ENCODE measurements at regions of chr3 and their contacts with region 1.

Region 1: DNA sequence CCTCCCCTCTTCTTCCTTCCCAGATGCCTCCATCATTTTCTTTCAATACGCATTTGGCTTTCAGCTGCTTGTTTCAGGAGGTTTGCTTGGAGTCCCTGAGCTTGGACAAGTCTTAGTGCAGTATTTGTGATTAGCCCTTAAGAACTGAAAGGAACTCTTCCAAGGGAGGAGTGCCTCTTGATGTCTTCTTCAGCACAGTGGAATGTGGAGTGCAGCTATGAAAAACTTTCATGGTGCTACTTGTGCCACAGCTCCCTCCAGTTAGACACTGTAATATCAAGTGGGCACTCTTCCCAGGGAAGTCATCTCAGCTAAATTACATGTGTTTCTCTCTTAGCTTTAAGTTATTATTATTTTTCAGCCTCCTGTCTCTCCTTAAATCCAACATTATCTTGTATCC is 173.1 kb downstream of the NECTIN3 start:
- DNase-seq: no peak

Region 2: DNA sequence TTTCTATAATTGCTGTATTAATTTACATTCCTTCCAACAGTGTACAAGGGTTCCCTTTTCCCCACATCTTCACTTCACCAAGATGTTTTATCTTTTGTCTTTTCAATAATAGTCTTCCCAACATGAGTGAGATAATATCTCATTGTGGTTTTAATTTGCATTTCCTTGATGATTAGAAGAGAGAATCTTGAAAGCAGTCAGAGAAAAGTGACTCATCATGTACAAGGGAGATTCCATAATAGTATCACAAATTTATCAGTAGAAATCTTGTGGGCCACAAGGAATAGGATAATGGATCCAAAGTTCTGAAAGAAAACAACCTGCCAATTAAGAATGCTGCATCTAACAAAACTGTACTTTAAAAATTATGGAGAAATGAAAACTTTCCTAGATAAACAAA is 16.1 kb after region 1 on chr3:
- intact Hi-C with region 1: loop called (anchors 1 kb)
- DNase-seq: no peak

Region 3: GRCh38 chr3:111362381-111363009 is 117.7 kb after region 1 on chr3:
- intact Hi-C with region 1: no loop called
- DNase-seq: no peak

Region 4: DNA sequence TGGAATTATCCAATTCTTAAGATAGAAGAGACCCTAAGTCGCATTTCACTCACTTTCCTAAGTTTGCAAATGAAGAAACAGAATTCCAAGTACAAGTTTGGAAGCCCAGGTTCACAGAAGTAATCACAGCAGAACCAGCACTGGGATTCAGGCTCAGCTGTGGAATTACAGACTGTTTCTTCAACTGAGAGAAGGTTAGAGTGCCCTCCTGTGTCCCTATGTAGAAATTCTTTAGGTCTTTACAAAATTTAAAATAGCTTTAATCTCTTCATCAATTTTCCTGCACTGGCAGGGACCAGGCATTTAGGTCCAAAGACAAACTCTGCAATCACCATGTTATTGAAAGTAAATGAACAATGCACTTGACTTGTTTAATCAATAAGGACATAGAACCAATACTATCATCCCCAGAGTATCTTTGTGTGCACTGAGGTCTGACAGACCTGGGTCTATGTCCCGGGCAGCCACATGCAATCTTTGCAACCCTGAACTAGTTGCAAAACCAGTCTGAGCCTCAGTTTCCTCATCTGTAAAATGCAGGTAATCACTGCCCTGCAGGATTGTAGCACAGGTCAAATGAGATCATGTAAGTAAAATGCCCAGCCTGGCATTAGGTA is 446.6 kb after region 1 on chr3:
- intact Hi-C with region 1: no loop called
- DNase-seq: no peak